Activated CD8-positive, alpha-beta memory T cell treated with anti-CD3 and anti-CD28 coated beads, Interleukin-2, amount 10 ng/mL, durations not matched to agents 7 days and 5 days (primary cell): ENCODE measurements at regions of chr7 and their contacts with region 1.

Region 1: GRCh38 chr7:26200444-26201246 is at the start of gene HNRNPA2B1:
- DNase-seq: peak; percentile 98
- ATAC-seq: peak; percentile 76
- H3K4me3 Mint-ChIP-seq: peak within 1 kb of the TSS; percentile 100
- H3K27ac Mint-ChIP-seq: peak within 1 kb of the TSS; percentile 99
- H3K4me1 Mint-ChIP-seq: peaks cover 35% of the 10 kb centered on the region
- H3K27me3 Mint-ChIP-seq: peaks cover 8% of the 10 kb centered on the region
- total RNA-seq, gene HNRNPA2B1: 768 to 857 TPM

Region 2: GRCh38 chr7:26151953-26152781 is 48.5 kb before region 1 on chr7 and contains the start of gene NFE2L3:
- CTCF ChIA-PET with region 1: interaction called, 12 read pairs
- DNase-seq: peak; percentile 89
- ATAC-seq: peak; percentile 77
- H3K4me3 Mint-ChIP-seq: peak within 1 kb of the TSS; percentile 89
- H3K27ac Mint-ChIP-seq: peak within 1 kb of the TSS; percentile 99
- H3K4me1 Mint-ChIP-seq: peaks cover 52% of the 10 kb centered on the region
- H3K27me3 Mint-ChIP-seq: no peaks in the 10 kb centered on the region
- total RNA-seq, gene NFE2L3: 20.1 to 44.4 TPM

Region 3: GRCh38 chr7:26187380-26188205 is 13.1 kb before region 1 on chr7:
- CTCF ChIA-PET with region 1: interaction called, 13 read pairs
- DNase-seq: no peak
- ATAC-seq: peak; percentile 15
- H3K4me3 Mint-ChIP-seq: no peak overlapping the region
- H3K27ac Mint-ChIP-seq: peak overlapping the region; percentile 81
- H3K4me1 Mint-ChIP-seq: peaks cover 74% of the 10 kb centered on the region
- H3K27me3 Mint-ChIP-seq: no peaks in the 10 kb centered on the region